B cell (primary cell): ENCODE measurements at regions of chr3 and their contacts with region 1.

Region 1: GRCh38 chr3:108062051-108062450 is 28.8 kb downstream of the CD47 start:
- DNase-seq: peak; percentile 64
- ATAC-seq: peak; percentile 86
- H3K4me3 ChIP-seq: no peak overlapping the region
- H3K4me3 Mint-ChIP-seq: peak overlapping the region; percentile 42
- H3K27ac ChIP-seq: peak overlapping the region in 1 of 2 donors; percentile 63
- H3K27ac Mint-ChIP-seq: peak overlapping the region; percentile 1
- H3K4me1 ChIP-seq: peaks cover 13 to 30% of the 10 kb centered on the region in 2 donors
- H3K4me1 Mint-ChIP-seq: peaks cover 64% of the 10 kb centered on the region
- H3K27me3 ChIP-seq: no peaks in the 10 kb centered on the region
- H3K27me3 Mint-ChIP-seq: no peaks in the 10 kb centered on the region
- CTCF ChIP-seq: no peak

Region 2: DNA sequence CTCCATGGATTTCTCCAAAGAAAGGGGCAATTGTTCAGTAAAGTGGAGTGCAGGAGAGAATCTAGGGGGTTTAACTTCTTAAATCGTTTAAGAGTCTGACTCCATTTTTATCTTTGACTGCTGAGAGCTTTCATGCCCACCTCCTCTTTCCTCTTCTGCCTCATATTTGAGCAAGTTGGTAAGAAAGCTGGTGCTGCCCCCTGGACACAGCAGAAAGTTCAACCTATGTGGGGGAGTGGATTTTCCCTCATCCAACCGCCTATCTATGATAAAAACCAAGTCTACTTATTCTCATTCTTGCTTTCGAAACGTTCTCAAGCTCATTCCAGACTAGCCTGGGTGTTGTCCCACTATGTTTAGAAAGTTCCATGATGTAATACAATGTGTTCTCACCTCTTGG is 260.3 kb after region 1 on chr3:
- CTCF ChIA-PET with region 1: interaction called, 3 read pairs
- POLR2A ChIA-PET with region 1: no interaction called
- intact Hi-C with region 1: loop called (anchors 5 kb)
- DNase-seq: peak; percentile 55
- ATAC-seq: peak; percentile 73
- H3K4me3 ChIP-seq: no peak overlapping the region
- H3K4me3 Mint-ChIP-seq: no peak overlapping the region
- H3K27ac ChIP-seq: no peak overlapping the region
- H3K27ac Mint-ChIP-seq: no peak overlapping the region
- H3K4me1 ChIP-seq: no peaks in the 10 kb centered on the region
- H3K4me1 Mint-ChIP-seq: peaks cover 12% of the 10 kb centered on the region
- H3K27me3 ChIP-seq: no peaks in the 10 kb centered on the region
- H3K27me3 Mint-ChIP-seq: no peaks in the 10 kb centered on the region
- CTCF ChIP-seq: peak; percentile 52